ENCODE measurements at regions of chr12 and their contacts with region 1.

Region 1: GRCh38 chr12:112409064-112409905 is at the start of gene RPL6:
- DNase-seq: peak; percentile 95
- ATAC-seq: peak; percentile 92
- H3K4me3 ChIP-seq: peak within 1 kb of the TSS; percentile 83
- H3K27ac ChIP-seq: peak within 1 kb of the TSS; percentile 65
- H3K4me1 ChIP-seq: peaks cover 15% of the 10 kb centered on the region
- H3K27me3 ChIP-seq: no peaks in the 10 kb centered on the region
- CTCF ChIP-seq: no peak
- total RNA-seq, gene RPL6: 1,342 and 1,509 TPM in 2 replicates

Region 2: DNA sequence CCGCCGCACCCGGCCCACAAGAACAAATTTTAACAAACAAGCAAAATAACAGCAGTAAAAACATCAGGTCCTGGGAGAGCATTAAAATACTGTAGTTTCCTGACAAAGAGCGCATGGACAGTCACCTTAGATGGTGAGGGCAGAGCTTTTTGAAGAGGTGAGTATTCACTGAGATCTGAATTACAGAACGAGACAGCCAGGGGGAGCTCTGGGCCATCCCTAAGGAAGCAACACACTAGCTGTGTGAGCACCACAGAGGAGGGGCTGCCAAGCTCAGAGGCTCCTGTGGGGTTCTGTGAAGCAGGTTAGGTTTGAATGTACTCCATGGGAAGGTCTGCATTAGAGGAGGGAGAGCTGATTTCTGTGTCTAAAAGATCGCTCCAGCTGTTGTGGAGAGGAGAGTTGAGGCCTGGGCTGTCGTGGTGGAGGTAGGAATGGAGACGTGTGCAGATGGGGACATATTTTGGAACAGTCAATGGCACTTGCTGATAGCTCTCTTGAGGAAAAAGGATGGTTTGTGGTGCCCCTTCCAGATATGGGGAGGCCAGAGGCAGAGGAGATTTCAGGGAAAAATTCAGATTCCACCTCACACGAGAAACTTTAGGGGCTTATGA is 211.1 kb before region 1 on chr12:
- CTCF ChIA-PET with region 1: no interaction called
- POLR2A ChIA-PET with region 1: no interaction called
- intact Hi-C with region 1: loop called (anchors 5 kb)
- DNase-seq: peak; percentile 82
- ATAC-seq: peak; percentile 99
- H3K4me3 ChIP-seq: no peak overlapping the region
- H3K27ac ChIP-seq: no peak overlapping the region
- H3K4me1 ChIP-seq: no peaks in the 10 kb centered on the region
- H3K27me3 ChIP-seq: no peaks in the 10 kb centered on the region
- CTCF ChIP-seq: peak; percentile 90

Region 3: GRCh38 chr12:112368856-112369255 is 40.4 kb before region 1 on chr12:
- CTCF ChIA-PET with region 1: no interaction called
- POLR2A ChIA-PET with region 1: no interaction called
- intact Hi-C with region 1: loop called (anchors 1 kb)
- DNase-seq: no peak
- ATAC-seq: no peak
- H3K4me3 ChIP-seq: no peak overlapping the region
- H3K27ac ChIP-seq: no peak overlapping the region
- H3K4me1 ChIP-seq: no peaks in the 10 kb centered on the region
- H3K27me3 ChIP-seq: no peaks in the 10 kb centered on the region
- CTCF ChIP-seq: no peak

Region 4: GRCh38 chr12:112473056-112473455 is 63.8 kb after region 1 on chr12:
- CTCF ChIA-PET with region 1: no interaction called
- POLR2A ChIA-PET with region 1: no interaction called
- intact Hi-C with region 1: no loop called
- DNase-seq: peak; percentile 9
- ATAC-seq: peak; percentile 48
- H3K4me3 ChIP-seq: no peak overlapping the region
- H3K27ac ChIP-seq: no peak overlapping the region
- H3K4me1 ChIP-seq: no peaks in the 10 kb centered on the region
- H3K27me3 ChIP-seq: no peaks in the 10 kb centered on the region
- CTCF ChIP-seq: peak; percentile 71

Measured in PC-3 (cell line).